A673 (cell line): ENCODE measurements at regions of chr2 and their contacts with region 1.

Region 1: DNA sequence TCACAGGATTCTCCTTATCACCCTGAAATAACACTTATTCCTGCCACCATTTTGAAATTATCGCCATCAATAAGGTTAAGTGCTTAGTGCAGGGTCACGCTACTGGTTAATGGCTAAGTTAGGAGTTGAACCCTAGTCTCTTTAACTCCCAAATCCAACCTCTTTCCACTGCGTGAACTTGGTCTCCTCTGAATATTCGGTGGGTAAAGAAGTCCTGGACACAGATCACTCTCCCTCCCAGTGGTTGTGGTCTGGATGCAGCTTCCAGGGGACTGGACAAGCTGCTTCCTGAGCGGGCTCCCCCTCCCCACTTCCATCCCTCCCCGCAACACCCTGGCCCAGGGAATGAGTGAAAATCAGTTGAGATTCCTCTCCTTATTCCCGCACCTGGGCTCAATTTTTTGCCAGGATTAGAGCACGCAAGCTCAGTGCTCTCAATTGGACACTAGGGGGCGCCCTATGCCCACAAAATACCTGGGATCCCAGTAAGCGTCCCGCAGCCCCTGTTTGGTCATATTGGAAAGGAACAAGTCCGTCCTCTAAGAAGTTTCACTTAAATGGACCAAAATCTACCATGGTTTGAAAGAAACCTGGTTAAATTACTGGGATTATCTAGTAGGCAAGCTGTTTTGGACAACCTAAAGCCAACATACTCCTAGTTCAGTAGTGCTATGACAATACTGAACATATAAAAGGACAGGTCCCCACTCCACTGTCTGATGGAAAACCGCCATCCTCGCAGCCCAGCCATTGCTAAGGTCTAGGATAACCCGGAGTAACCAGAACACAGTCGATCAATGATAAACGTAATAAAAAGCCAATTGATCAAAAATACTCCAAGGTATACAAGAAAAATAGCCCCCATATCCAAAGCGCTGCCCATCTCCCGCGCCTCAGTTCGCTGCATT is 40.4 kb downstream of the DHRS9 start:
- DNase-seq: peak; percentile 84
- H3K4me3 ChIP-seq: no peak overlapping the region
- H3K27ac ChIP-seq: no peak overlapping the region
- H3K4me1 ChIP-seq: no peaks in the 10 kb centered on the region
- H3K27me3 ChIP-seq: peaks cover 3% of the 10 kb centered on the region
- CTCF ChIP-seq: peak; percentile 93

Region 2: GRCh38 chr2:169131587-169132512 is 22.1 kb after region 1 on chr2:
- CTCF ChIA-PET with region 1: interaction called, 17 read pairs
- POLR2A ChIA-PET with region 1: no interaction called
- intact Hi-C with region 1: no loop called
- DNase-seq: peak; percentile 72
- H3K4me3 ChIP-seq: no peak overlapping the region
- H3K27ac ChIP-seq: no peak overlapping the region
- H3K4me1 ChIP-seq: no peaks in the 10 kb centered on the region
- H3K27me3 ChIP-seq: no peaks in the 10 kb centered on the region
- CTCF ChIP-seq: peak; percentile 80

Region 3: DNA sequence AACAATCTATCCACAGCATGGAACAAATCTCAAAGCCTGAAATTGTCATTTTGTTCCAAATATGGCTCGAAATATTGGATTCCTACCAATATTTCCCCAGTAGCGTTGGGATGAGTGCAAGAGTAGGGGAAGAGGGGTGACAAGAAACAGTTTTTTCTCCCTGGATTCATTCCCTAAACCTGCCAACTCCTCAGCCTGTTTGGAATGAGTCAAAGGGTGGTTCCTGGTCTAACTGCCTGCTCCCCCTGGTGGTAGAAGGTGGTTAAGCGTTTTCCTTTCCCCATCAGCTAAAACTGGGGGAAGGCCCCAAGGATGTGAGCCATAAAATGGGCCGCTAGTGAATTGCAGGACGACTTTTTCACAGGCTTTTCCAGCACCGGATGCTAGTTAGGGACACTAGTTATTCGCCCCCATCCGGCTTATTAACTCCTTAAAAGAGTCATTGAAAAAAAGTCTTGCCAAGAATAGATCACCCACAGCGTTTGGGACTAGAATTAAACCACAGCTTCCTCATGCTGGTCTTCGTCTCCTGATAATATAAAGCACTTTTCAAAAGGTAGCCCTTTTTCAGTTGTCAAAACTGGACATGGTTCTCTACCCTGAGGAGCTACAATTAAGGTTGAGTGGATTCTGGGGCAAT is 32.1 kb after region 1 on chr2:
- CTCF ChIA-PET with region 1: interaction called, 6 read pairs
- POLR2A ChIA-PET with region 1: no interaction called
- intact Hi-C with region 1: loop called (anchors 5 kb)
- DNase-seq: peak; percentile 72
- H3K4me3 ChIP-seq: no peak overlapping the region
- H3K27ac ChIP-seq: no peak overlapping the region
- H3K4me1 ChIP-seq: no peaks in the 10 kb centered on the region
- H3K27me3 ChIP-seq: no peaks in the 10 kb centered on the region
- CTCF ChIP-seq: peak; percentile 83

Region 4: GRCh38 chr2:169221745-169222369 is 112.1 kb after region 1 on chr2:
- CTCF ChIA-PET with region 1: interaction called, 3 read pairs
- POLR2A ChIA-PET with region 1: no interaction called
- intact Hi-C with region 1: loop called (anchors 5 kb)
- DNase-seq: peak; percentile 38
- H3K4me3 ChIP-seq: no peak overlapping the region
- H3K27ac ChIP-seq: no peak overlapping the region
- H3K4me1 ChIP-seq: no peaks in the 10 kb centered on the region
- H3K27me3 ChIP-seq: no peaks in the 10 kb centered on the region
- CTCF ChIP-seq: peak; percentile 59

Region 5: DNA sequence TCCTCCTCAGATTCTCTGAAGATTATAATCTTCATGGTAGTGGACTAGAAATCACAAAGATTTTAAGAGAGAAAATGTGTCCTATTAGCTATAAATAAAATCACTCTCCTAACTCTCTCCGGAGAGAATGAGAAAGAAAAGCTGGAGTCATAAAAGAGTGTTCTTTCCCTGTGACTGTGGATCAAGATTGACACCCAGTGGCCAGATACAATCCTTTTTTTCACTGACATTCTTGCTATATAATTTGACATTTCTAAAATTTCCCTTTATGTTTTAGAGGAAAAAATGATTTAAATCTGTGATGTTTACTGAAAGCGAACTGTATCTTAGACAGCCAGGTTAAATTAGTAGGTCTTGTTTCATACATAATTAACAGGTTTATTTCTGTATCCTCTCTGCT is 287.9 kb after region 1 on chr2:
- CTCF ChIA-PET with region 1: interaction called, 9 read pairs
- POLR2A ChIA-PET with region 1: no interaction called
- intact Hi-C with region 1: loop called (anchors 10 kb)
- DNase-seq: peak; percentile 16
- H3K4me3 ChIP-seq: no peak overlapping the region
- H3K27ac ChIP-seq: no peak overlapping the region
- H3K4me1 ChIP-seq: no peaks in the 10 kb centered on the region
- H3K27me3 ChIP-seq: peaks cover 19% of the 10 kb centered on the region
- CTCF ChIP-seq: peak; percentile 47